ENCODE measurements at regions of chr10 and their contacts with region 1.

Region 1: DNA sequence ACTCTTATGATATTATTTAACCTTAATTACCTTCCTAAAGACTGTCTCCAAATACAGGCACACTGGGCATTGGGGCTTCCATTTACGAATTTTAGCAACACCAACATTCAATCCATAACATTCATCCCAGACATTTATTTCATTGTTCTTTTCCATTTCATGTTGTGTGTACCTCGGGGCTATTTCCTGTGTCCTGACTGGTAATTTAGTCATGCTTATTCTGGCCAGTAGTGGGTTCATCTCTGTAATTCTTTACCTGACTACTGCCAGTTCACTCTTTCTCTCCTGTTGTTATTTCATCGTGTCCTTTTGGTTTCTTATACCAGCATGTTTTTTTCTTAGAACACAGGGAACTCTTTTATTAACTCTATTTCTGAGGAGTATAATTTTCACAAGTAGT is 225.7 kb downstream of the PLXDC2 start:
- DNase-seq: no peak
- ATAC-seq: no peak
- H3K4me3 ChIP-seq: no peak overlapping the region
- H3K4me3 Mint-ChIP-seq: no peak overlapping the region
- H3K27ac ChIP-seq: no peak overlapping the region
- H3K27ac Mint-ChIP-seq: no peak overlapping the region
- H3K4me1 ChIP-seq: no peaks in the 10 kb centered on the region
- H3K4me1 Mint-ChIP-seq: no peaks in the 10 kb centered on the region
- H3K27me3 ChIP-seq: no peaks in the 10 kb centered on the region
- H3K27me3 Mint-ChIP-seq: no peaks in the 10 kb centered on the region
- CTCF ChIP-seq: no peak

Region 2: GRCh38 chr10:20065814-20066213 is 23.9 kb after region 1 on chr10:
- CTCF ChIA-PET with region 1: no interaction called
- POLR2A ChIA-PET with region 1: no interaction called
- intact Hi-C with region 1: loop called (anchors 2 kb)
- DNase-seq: no peak
- ATAC-seq: no peak
- H3K4me3 ChIP-seq: no peak overlapping the region
- H3K4me3 Mint-ChIP-seq: no peak overlapping the region
- H3K27ac ChIP-seq: no peak overlapping the region
- H3K27ac Mint-ChIP-seq: no peak overlapping the region
- H3K4me1 ChIP-seq: no peaks in the 10 kb centered on the region
- H3K4me1 Mint-ChIP-seq: no peaks in the 10 kb centered on the region
- H3K27me3 ChIP-seq: no peaks in the 10 kb centered on the region
- H3K27me3 Mint-ChIP-seq: no peaks in the 10 kb centered on the region
- CTCF ChIP-seq: no peak